Caco-2 (cell line): ENCODE measurements at regions of chr21 and their contacts with region 1.

Region 1: DNA sequence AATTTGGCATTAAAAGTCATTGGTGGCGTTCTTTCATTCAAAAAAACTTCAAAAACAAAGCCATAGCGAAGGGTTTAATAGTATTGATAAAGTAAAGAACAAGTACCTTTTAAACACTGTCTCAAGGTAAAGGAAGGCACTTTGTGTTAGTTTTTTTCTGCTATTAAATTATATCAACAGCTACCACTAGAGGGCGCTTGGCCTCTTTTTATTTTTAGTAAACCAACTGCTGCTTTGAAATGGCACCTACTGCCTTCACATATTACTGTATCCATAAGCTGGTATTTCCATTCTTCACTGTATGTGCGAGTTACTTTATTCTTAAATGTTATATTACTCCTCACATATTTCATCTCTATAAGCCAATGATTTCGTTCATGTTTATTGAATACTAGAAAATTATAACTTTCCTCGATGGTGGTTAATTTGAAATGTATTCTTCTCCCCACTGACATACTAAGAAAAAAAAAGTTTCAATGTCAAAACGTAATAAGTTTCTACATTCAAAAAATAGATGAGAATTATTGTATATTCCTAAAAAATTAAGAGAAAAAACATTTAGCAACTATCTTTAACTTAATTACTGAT is 125.7 kb upstream of the CXADR start:
- DNase-seq: peak in 1 of 2 experiments; percentile 72
- H3K4me3 ChIP-seq: no peak overlapping the region
- H3K4me3 Mint-ChIP-seq: no peak overlapping the region
- H3K27ac Mint-ChIP-seq: no peak overlapping the region
- H3K4me1 ChIP-seq: no peaks in the 10 kb centered on the region; the same call in 1 of the 2 replicates
- H3K4me1 Mint-ChIP-seq: peaks cover 5% of the 10 kb centered on the region
- H3K27me3 ChIP-seq: no peaks in the 10 kb centered on the region
- H3K27me3 Mint-ChIP-seq: no peaks in the 10 kb centered on the region
- CTCF ChIP-seq: peak; percentile 40 to 82

Region 2: GRCh38 chr21:17466166-17466565 is 79.0 kb after region 1 on chr21:
- CTCF ChIA-PET with region 1: no interaction called
- POLR2A ChIA-PET with region 1: no interaction called
- intact Hi-C with region 1: no loop called
- DNase-seq: no peak
- H3K4me3 ChIP-seq: no peak overlapping the region
- H3K4me3 Mint-ChIP-seq: no peak overlapping the region
- H3K27ac Mint-ChIP-seq: no peak overlapping the region
- H3K4me1 ChIP-seq: peaks cover 34% of the 10 kb centered on the region
- H3K4me1 Mint-ChIP-seq: peaks cover 26% of the 10 kb centered on the region
- H3K27me3 ChIP-seq: no peaks in the 10 kb centered on the region
- H3K27me3 Mint-ChIP-seq: no peaks in the 10 kb centered on the region
- CTCF ChIP-seq: no peak

Region 3: GRCh38 chr21:17585875-17586450 is 198.8 kb after region 1 on chr21:
- CTCF ChIA-PET with region 1: interaction called, 35 read pairs
- POLR2A ChIA-PET with region 1: no interaction called
- intact Hi-C with region 1: loop called (anchors 1 kb)
- DNase-seq: peak in 1 of 2 experiments; percentile 39
- H3K4me3 ChIP-seq: no peak overlapping the region
- H3K4me3 Mint-ChIP-seq: no peak overlapping the region
- H3K27ac Mint-ChIP-seq: no peak overlapping the region
- H3K4me1 ChIP-seq: peaks cover 8% of the 10 kb centered on the region
- H3K4me1 Mint-ChIP-seq: peaks cover 12% of the 10 kb centered on the region
- H3K27me3 ChIP-seq: no peaks in the 10 kb centered on the region
- H3K27me3 Mint-ChIP-seq: no peaks in the 10 kb centered on the region
- CTCF ChIP-seq: peak; percentile 40 to 57